Mammary epithelial cell (primary cell): ENCODE measurements at regions of chr11 and their contacts with region 1.

Region 1: GRCh38 chr11:82038153-82038552 is 695.5 kb downstream of the FAM181B start:
- DNase-seq: no peak
- H3K4me3 ChIP-seq: no peak overlapping the region
- H3K27ac ChIP-seq: no peak overlapping the region
- H3K4me1 ChIP-seq: no peaks in the 10 kb centered on the region
- H3K27me3 ChIP-seq: no peaks in the 10 kb centered on the region
- CTCF ChIP-seq: peak; percentile 10 to 55

Region 2: GRCh38 chr11:81644239-81644840 is 393.8 kb before region 1 on chr11:
- CTCF ChIA-PET with region 1: no interaction called
- dilution Hi-C with region 1: no loop called
- in situ Hi-C with region 1: loop called in 1 of 2 experiments (anchors 10 kb)
- intact Hi-C with region 1: loop called (anchors 1 kb)
- DNase-seq: peak; percentile 51
- H3K4me3 ChIP-seq: no peak overlapping the region
- H3K27ac ChIP-seq: no peak overlapping the region
- H3K4me1 ChIP-seq: no peaks in the 10 kb centered on the region
- H3K27me3 ChIP-seq: peaks cover 5% of the 10 kb centered on the region
- CTCF ChIP-seq: peak; percentile 63 to 65

Region 3: DNA sequence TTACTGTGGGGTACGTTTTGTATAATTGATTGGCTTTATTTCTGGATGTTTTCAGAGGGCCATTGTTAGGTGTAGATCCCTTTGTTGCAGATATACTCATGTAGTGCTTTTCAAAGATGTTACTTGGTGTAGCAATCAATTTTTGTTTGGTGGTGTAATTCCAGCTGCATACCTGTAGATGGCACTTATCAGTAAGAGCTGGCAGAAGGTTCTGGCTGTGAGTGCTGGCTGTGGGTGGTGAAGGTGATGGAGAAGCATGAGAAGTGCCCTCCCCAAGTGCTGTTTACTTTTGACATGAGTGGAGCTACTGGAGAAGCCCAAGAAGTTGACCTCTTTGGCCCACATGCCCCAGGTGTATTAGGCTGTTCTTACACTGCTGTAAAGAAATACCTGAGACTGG is 379.4 kb before region 1 on chr11:
- CTCF ChIA-PET with region 1: no interaction called
- dilution Hi-C with region 1: no loop called
- in situ Hi-C with region 1: no loop called
- intact Hi-C with region 1: loop called (anchors 5 kb)
- DNase-seq: peak; percentile 25
- H3K4me3 ChIP-seq: no peak overlapping the region
- H3K27ac ChIP-seq: no peak overlapping the region
- H3K4me1 ChIP-seq: no peaks in the 10 kb centered on the region
- H3K27me3 ChIP-seq: peaks cover 3% of the 10 kb centered on the region
- CTCF ChIP-seq: peak; percentile 63 to 83

Region 4: DNA sequence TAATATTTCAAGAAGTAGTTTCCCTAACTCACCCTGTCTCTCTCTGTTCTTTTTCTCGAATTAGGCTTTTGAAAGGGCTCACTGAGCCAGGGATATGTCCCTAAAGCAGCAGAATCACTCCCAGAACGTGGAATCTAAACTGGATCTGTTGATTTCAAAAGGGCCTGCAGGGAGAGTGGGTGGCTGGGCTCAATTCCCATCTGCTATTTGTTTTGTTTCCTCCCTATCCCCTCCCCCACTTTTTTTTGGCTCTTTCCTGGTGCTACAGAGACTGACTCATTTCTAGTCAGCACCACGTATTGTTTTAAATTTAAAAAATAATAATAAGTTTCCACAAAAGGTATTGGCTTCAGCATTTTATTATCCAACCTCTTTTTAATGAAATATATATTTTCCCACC is 266.0 kb before region 1 on chr11:
- CTCF ChIA-PET with region 1: no interaction called
- dilution Hi-C with region 1: no loop called
- in situ Hi-C with region 1: no loop called
- intact Hi-C with region 1: no loop called
- DNase-seq: no peak
- H3K4me3 ChIP-seq: no peak overlapping the region
- H3K27ac ChIP-seq: no peak overlapping the region
- H3K4me1 ChIP-seq: no peaks in the 10 kb centered on the region
- H3K27me3 ChIP-seq: peaks cover 2% of the 10 kb centered on the region
- CTCF ChIP-seq: no peak

Region 5: DNA sequence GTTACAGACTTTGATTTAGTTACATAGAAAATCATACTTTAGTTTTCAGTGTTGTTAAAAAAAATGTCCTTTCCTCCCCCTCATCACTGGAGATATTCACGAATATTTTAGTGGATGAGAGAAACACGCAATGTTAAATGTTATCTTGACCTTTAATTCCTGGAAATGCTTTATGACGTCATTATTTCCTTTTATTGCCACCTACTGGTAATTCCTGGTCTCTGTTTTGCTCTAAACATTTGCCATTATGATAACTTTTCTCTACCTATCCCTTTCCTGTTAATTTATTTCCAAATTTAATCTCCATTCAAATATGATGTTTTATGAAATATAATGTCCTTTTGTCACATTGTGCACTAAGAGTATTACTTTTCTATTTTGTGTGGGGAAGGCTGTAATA is 75.1 kb before region 1 on chr11:
- CTCF ChIA-PET with region 1: no interaction called
- dilution Hi-C with region 1: no loop called
- in situ Hi-C with region 1: no loop called
- intact Hi-C with region 1: no loop called
- DNase-seq: no peak
- H3K4me3 ChIP-seq: no peak overlapping the region
- H3K27ac ChIP-seq: no peak overlapping the region
- H3K4me1 ChIP-seq: no peaks in the 10 kb centered on the region
- H3K27me3 ChIP-seq: no peaks in the 10 kb centered on the region
- CTCF ChIP-seq: peak; percentile 42 to 52

Region 6: GRCh38 chr11:82076126-82076525 is 38.0 kb after region 1 on chr11:
- CTCF ChIA-PET with region 1: no interaction called
- dilution Hi-C with region 1: no loop called
- in situ Hi-C with region 1: no loop called
- intact Hi-C with region 1: no loop called
- DNase-seq: no peak
- H3K4me3 ChIP-seq: no peak overlapping the region
- H3K27ac ChIP-seq: no peak overlapping the region
- H3K4me1 ChIP-seq: no peaks in the 10 kb centered on the region
- H3K27me3 ChIP-seq: no peaks in the 10 kb centered on the region
- CTCF ChIP-seq: no peak